ENCODE measurements at regions of chr1 and their contacts with region 1.

Region 1: GRCh38 chr1:245957427-245957826 is 549.7 kb downstream of the SMYD3 start:
- DNase-seq: no peak
- ATAC-seq: no peak
- H3K4me3 ChIP-seq: no peak overlapping the region
- H3K27ac ChIP-seq: no peak overlapping the region
- H3K4me1 ChIP-seq: peaks cover 12 to 38% of the 10 kb centered on the region in 2 experiments
- H3K27me3 ChIP-seq: no peaks in the 10 kb centered on the region
- CTCF ChIP-seq: no peak
- EP300 ChIP-seq: no peak
- POLR2A ChIP-seq: no peak
- RAD21 ChIP-seq: no peak

Region 2: DNA sequence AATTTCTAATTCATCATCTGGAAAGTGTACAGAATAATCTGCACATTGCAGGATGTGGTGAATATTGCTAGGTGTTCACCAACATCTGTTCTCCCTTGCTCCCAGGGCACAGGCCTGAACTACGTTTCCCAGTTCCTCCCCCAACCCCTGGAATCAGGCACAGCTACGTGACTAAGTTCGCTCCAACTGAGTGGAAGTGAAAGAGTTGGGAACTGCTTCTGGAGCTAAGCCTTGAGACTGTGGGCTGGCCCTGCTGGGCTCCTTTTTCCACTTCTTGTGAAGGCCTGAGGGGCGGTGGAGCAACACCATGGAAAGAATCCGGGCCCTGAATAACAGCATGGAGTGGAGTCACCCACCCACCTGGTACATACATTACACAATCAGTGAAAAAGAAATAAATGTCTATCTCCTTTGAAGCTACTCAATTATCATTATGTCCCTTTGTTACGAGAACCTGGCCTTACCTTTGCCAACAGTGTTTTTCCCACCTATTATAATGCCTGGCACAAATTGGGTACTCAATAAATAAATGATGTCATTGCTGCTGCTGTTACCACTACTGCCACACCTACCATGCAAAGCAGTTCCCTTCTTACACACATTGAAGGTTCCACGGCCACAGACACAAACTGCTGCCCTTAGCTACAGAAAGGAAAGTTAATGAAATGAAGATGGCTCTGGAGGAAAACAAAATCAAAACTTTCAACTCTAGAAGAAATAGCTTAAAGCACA is 15.2 kb after region 1 on chr1:
- CTCF ChIA-PET with region 1: no interaction called
- POLR2A ChIA-PET with region 1: interaction called, 13 read pairs
- in situ Hi-C with region 1: no loop called
- intact Hi-C with region 1: no loop called
- DNase-seq: no peak
- ATAC-seq: no peak
- H3K4me3 ChIP-seq: no peak overlapping the region
- H3K27ac ChIP-seq: no peak overlapping the region
- H3K4me1 ChIP-seq: no peaks in the 10 kb centered on the region; a peak in 2 of 5 replicates
- H3K27me3 ChIP-seq: no peaks in the 10 kb centered on the region
- CTCF ChIP-seq: no peak
- EP300 ChIP-seq: no peak
- POLR2A ChIP-seq: no peak
- RAD21 ChIP-seq: no peak

Region 3: GRCh38 chr1:246020211-246020954 is 63.0 kb after region 1 on chr1:
- CTCF ChIA-PET with region 1: no interaction called
- POLR2A ChIA-PET with region 1: no interaction called
- in situ Hi-C with region 1: no loop called
- intact Hi-C with region 1: no loop called
- DNase-seq: no peak
- ATAC-seq: no peak
- H3K4me3 ChIP-seq: no peak overlapping the region
- H3K27ac ChIP-seq: no peak overlapping the region
- H3K4me1 ChIP-seq: no peaks in the 10 kb centered on the region
- H3K27me3 ChIP-seq: no peaks in the 10 kb centered on the region
- CTCF ChIP-seq: no peak
- EP300 ChIP-seq: no peak
- POLR2A ChIP-seq: no peak
- RAD21 ChIP-seq: no peak